CD8-positive, alpha-beta T cell (primary cell): ENCODE measurements at regions of chr14 and their contacts with region 1.

Region 1: DNA sequence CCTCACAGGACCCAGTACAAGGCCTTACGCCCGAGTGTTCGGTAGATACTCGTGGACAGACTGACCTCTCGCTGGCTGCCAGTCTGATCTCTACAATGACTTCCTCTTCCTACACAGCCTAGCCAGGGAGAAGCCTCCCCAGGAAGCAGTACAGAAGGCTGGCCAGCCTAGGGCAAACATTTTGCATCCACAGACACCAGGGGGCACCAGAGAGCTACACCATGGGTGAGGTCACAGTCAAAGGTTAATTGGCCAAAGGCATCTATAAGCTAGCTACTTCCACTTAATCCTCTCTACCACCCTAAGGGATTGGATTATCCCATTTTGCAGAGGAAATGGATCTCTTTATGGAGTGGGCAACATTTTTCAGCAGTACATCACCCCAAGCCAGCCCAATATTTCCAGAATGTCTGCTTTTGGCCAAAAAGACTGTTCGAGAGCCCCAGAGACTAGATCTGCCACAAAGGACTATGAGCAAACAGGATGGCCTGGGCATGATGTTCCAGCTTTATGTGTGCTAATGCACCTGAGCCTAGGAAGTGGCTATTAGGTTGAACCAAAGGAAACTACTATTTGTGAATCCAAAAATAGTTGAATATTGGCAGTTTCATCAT is 14.6 kb upstream of the PNMA1 start:
- DNase-seq: peak; percentile 70 to 95 (median 86)
- ATAC-seq: peak; percentile 93
- H3K4me3 ChIP-seq: no peak overlapping the region
- H3K4me3 Mint-ChIP-seq: no peak overlapping the region
- H3K27ac ChIP-seq: peak overlapping the region in 1 of 2 experiments; percentile 23
- H3K27ac Mint-ChIP-seq: peak overlapping the region; percentile 79
- H3K4me1 ChIP-seq: no peaks in the 10 kb centered on the region
- H3K4me1 Mint-ChIP-seq: peaks cover 13% of the 10 kb centered on the region
- H3K27me3 ChIP-seq: no peaks in the 10 kb centered on the region
- H3K27me3 Mint-ChIP-seq: no peaks in the 10 kb centered on the region
- CTCF ChIP-seq: peak; percentile 97

Region 2: DNA sequence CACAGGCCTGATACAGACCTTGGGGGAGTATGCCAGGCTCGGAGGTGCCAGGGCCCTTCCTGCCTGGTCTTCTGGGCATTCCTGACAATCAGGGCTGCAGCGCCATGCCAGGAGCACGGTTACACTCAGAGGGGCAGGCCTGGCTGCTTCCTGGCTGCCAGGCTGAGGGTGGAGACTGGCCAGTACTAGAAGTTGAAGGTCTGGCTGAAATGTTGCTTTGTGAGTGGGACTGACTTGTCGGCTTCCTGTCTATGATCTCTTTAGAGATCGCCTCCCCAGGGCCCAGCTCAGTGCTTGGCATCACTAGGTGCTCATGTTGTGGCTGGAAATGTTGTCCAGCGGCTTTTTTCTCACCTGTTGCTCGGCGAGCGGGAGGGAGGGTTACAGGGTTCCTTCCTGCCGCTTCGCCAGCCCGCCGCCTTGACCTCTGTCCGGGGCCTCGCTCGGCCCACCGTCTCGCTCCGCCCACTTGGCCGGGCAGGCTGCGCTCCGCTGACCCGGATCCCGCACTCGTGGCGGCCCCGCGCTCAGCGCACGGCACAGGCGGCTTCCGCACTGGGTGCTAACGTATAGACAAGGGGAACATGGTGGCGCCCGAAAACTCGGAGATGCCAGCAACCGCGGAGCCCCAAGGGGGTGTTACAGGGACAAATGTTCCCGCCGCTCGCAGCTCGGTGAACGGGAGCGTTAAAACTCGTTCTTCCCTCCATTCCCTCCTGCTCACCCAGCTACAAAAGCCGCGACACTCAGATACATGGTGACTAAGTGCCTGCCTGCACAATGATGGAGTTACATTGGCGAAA is 458.9 kb before region 1 on chr14:
- CTCF ChIA-PET with region 1: no interaction called
- POLR2A ChIA-PET with region 1: no interaction called
- intact Hi-C with region 1: no loop called
- DNase-seq: no peak
- ATAC-seq: no peak
- H3K4me3 ChIP-seq: peak overlapping the region; percentile 7 to 25
- H3K4me3 Mint-ChIP-seq: peak overlapping the region; percentile 56
- H3K27ac ChIP-seq: no peak overlapping the region
- H3K27ac Mint-ChIP-seq: no peak overlapping the region
- H3K4me1 ChIP-seq: peaks cover 8% of the 10 kb centered on the region
- H3K4me1 Mint-ChIP-seq: peaks cover 16% of the 10 kb centered on the region
- H3K27me3 ChIP-seq: no peaks in the 10 kb centered on the region
- H3K27me3 Mint-ChIP-seq: peaks cover 17% of the 10 kb centered on the region
- CTCF ChIP-seq: no peak

Region 3: GRCh38 chr14:73713803-73714655 is 14.8 kb before region 1 on chr14 and contains the start of gene PNMA1:
- CTCF ChIA-PET with region 1: interaction called, 18 read pairs
- POLR2A ChIA-PET with region 1: interaction called, 4 read pairs
- intact Hi-C with region 1: no loop called
- DNase-seq: peak; percentile 67 to 94 (median 87)
- ATAC-seq: peak; percentile 72
- H3K4me3 ChIP-seq: peak within 1 kb of the TSS; percentile 71 to 92
- H3K4me3 Mint-ChIP-seq: peak within 1 kb of the TSS; percentile 92
- H3K27ac ChIP-seq: peak within 1 kb of the TSS; percentile 76 to 77
- H3K27ac Mint-ChIP-seq: peak within 1 kb of the TSS; percentile 96
- H3K4me1 ChIP-seq: peaks cover 10% of the 10 kb centered on the region
- H3K4me1 Mint-ChIP-seq: peaks cover 34% of the 10 kb centered on the region
- H3K27me3 ChIP-seq: no peaks in the 10 kb centered on the region
- H3K27me3 Mint-ChIP-seq: no peaks in the 10 kb centered on the region
- CTCF ChIP-seq: no peak
- total RNA-seq, gene PNMA1: 39.4 to 39.8 TPM

Region 4: GRCh38 chr14:73759714-73760597 is 31.1 kb after region 1 on chr14:
- CTCF ChIA-PET with region 1: interaction called, 52 read pairs
- POLR2A ChIA-PET with region 1: interaction called, 16 read pairs
- intact Hi-C with region 1: loop called in 1 of 2 experiments (anchors 1 kb)
- DNase-seq: peak; percentile 92 to 99 (median 97)
- ATAC-seq: peak; percentile 73
- H3K4me3 ChIP-seq: peak overlapping the region; percentile 55 to 69
- H3K4me3 Mint-ChIP-seq: peak overlapping the region; percentile 92
- H3K27ac ChIP-seq: peak overlapping the region; percentile 82 to 94
- H3K27ac Mint-ChIP-seq: peak overlapping the region; percentile 99
- H3K4me1 ChIP-seq: peaks cover 76% of the 10 kb centered on the region
- H3K4me1 Mint-ChIP-seq: peaks cover 81% of the 10 kb centered on the region
- H3K27me3 ChIP-seq: no peaks in the 10 kb centered on the region
- H3K27me3 Mint-ChIP-seq: no peaks in the 10 kb centered on the region
- CTCF ChIP-seq: peak; percentile 16

Region 5: GRCh38 chr14:73785873-73786695 is 57.3 kb after region 1 on chr14:
- CTCF ChIA-PET with region 1: interaction called, 54 read pairs
- POLR2A ChIA-PET with region 1: interaction called, 7 read pairs
- intact Hi-C with region 1: no loop called
- DNase-seq: peak; percentile 32 to 82 (median 67)
- ATAC-seq: peak; percentile 62
- H3K4me3 ChIP-seq: peak overlapping the region; percentile 85 to 88
- H3K4me3 Mint-ChIP-seq: peak overlapping the region; percentile 95
- H3K27ac ChIP-seq: peak overlapping the region; percentile 83 to 89
- H3K27ac Mint-ChIP-seq: peak overlapping the region; percentile 94
- H3K4me1 ChIP-seq: peaks cover 57% of the 10 kb centered on the region
- H3K4me1 Mint-ChIP-seq: peaks cover 59% of the 10 kb centered on the region
- H3K27me3 ChIP-seq: no peaks in the 10 kb centered on the region
- H3K27me3 Mint-ChIP-seq: no peaks in the 10 kb centered on the region
- CTCF ChIP-seq: no peak

Region 6: GRCh38 chr14:73851644-73852382 is 123.0 kb after region 1 on chr14 and contains the start of gene PTGR2:
- CTCF ChIA-PET with region 1: interaction called, 14 read pairs
- POLR2A ChIA-PET with region 1: no interaction called
- intact Hi-C with region 1: no loop called
- DNase-seq: peak; percentile 77 to 97 (median 89)
- ATAC-seq: peak; percentile 93
- H3K4me3 ChIP-seq: peak within 1 kb of the TSS; percentile 47 to 63
- H3K4me3 Mint-ChIP-seq: peak within 1 kb of the TSS; percentile 90
- H3K27ac ChIP-seq: peak within 1 kb of the TSS; percentile 70 to 81
- H3K27ac Mint-ChIP-seq: peak within 1 kb of the TSS; percentile 98
- H3K4me1 ChIP-seq: peaks cover 6% of the 10 kb centered on the region
- H3K4me1 Mint-ChIP-seq: peaks cover 21% of the 10 kb centered on the region
- H3K27me3 ChIP-seq: no peaks in the 10 kb centered on the region
- H3K27me3 Mint-ChIP-seq: no peaks in the 10 kb centered on the region
- CTCF ChIP-seq: no peak
- total RNA-seq, gene PTGR2: 1.2 to 1.4 TPM

Region 7: DNA sequence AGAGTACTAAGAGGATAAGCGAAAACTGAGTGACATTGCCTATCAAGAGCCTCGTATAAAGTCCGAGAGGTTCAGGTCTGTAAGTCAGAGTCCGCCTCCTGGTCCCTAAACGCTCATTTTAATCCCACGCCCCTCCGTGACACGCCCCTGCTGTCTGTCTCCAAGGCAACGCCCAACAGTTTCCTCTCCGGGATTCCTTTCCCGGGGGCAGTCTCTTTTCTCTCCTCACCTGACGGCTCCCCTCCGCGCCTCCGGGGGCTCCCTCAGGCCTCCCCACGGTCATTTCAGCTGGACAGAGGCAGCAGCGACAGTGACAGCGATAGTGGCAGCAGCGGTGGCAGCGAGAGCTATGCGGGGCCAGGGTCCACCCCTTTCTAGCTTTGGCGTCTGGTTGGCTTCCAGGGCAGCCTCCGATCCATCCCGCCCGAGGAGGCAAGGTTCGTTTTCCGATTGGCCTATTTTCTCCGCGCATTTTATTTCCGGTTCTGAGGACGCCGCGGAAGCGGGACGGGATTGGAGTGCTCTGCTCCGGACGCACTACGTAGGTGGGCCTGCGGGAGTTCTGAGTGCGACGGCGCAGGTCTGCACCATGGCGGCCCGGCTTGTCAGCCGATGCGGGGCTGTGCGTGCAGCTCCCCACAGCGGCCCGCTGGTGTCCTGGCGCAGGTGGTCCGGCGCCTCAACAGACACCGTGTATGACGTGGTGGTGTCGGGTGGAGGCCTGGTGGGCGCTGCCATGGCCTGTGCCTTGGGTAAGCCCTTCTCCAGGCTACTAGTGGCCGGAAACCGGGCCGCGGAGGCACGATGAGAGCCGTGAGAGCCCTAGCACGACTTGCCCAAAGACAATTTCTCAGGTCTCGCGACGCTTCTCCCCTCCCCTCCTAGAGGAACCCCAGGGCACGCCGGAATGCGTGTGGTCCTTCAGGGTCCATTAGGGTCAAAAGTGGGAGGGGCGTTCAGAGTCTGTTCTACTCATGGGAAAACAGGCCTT is 221.2 kb after region 1 on chr14 and contains the starts of genes COQ6 and FAM161B:
- CTCF ChIA-PET with region 1: no interaction called
- POLR2A ChIA-PET with region 1: no interaction called
- intact Hi-C with region 1: loop called in 1 of 2 experiments (anchors 5 kb)
- DNase-seq: peak; percentile 82 to 98 (median 90)
- ATAC-seq: peak; percentile 92
- H3K4me3 ChIP-seq: peak within 1 kb of the TSS; percentile 74 to 83
- H3K4me3 Mint-ChIP-seq: peak within 1 kb of the TSS; percentile 98
- H3K27ac ChIP-seq: peak within 1 kb of the TSS; percentile 93 to 95
- H3K27ac Mint-ChIP-seq: peak within 1 kb of the TSS; percentile 96
- H3K4me1 ChIP-seq: peaks cover 10% of the 10 kb centered on the region
- H3K4me1 Mint-ChIP-seq: peaks cover 26% of the 10 kb centered on the region
- H3K27me3 ChIP-seq: no peaks in the 10 kb centered on the region
- H3K27me3 Mint-ChIP-seq: no peaks in the 10 kb centered on the region
- CTCF ChIP-seq: no peak
- total RNA-seq, gene COQ6: 33.9 to 44.4 TPM
- total RNA-seq, gene FAM161B: 1.9 to 3.2 TPM